ENCODE measurements at regions of chr10 and their contacts with region 1.

Region 1: GRCh38 chr10:128047351-128047750 is 78.9 kb downstream of the MKI67 start:
- DNase-seq: peak; percentile 65
- ATAC-seq: peak; percentile 99
- H3K4me3 Mint-ChIP-seq: no peak overlapping the region
- H3K27ac Mint-ChIP-seq: peak overlapping the region; percentile 45
- H3K4me1 Mint-ChIP-seq: peaks cover 9% of the 10 kb centered on the region
- H3K27me3 Mint-ChIP-seq: peaks cover 6% of the 10 kb centered on the region; the same call in 1 of the 2 replicates
- CTCF ChIP-seq: no peak

Region 2: DNA sequence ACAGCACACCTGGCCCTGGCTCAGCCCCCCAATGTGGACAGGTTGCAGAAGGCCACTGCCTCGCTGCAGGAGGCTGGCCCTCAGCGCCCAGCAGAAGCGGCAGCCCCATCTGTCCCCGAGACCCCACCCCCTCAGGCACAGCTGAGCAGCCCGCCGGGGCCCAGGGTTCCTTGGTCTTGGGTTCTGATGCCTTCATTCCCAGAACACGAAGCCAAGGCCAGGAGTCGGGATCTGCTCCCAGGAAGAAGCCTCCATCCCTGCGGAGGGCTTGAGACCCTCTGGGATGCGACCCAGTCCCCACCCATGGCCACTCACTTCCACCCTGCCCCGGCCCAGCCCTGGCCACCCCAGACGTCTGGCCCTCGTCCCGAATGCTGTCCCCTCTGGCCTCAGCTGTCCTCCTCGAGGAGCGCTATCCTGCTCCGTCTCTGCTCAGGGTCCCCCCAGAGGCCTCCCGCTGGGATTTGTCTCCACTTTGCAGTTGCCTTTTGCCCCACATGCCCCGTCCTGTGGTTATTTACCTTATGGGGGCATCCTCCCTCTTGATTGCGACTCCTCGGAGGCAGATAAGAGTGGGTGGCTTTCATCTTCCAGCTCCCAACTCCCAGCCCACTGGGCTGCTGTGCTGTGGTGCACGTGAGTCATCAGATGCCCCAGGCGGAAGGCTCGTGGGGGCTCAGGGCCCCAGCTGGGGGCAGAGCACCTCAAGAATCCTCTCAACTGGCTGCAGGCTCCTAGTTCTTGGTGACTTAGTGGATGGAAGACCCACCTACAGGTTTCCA is 18.7 kb before region 1 on chr10:
- CTCF ChIA-PET with region 1: no interaction called
- POLR2A ChIA-PET with region 1: no interaction called
- DNase-seq: no peak
- ATAC-seq: no peak
- H3K4me3 Mint-ChIP-seq: no peak overlapping the region
- H3K27ac Mint-ChIP-seq: no peak overlapping the region
- H3K4me1 Mint-ChIP-seq: peaks cover 5% of the 10 kb centered on the region; the same call in 1 of the 2 replicates
- H3K27me3 Mint-ChIP-seq: no peaks in the 10 kb centered on the region
- CTCF ChIP-seq: no peak

Region 3: GRCh38 chr10:128064108-128064969 is 17.0 kb after region 1 on chr10:
- CTCF ChIA-PET with region 1: interaction called, 35 read pairs
- POLR2A ChIA-PET with region 1: no interaction called
- DNase-seq: no peak
- ATAC-seq: no peak
- H3K4me3 Mint-ChIP-seq: no peak overlapping the region
- H3K27ac Mint-ChIP-seq: no peak overlapping the region
- H3K4me1 Mint-ChIP-seq: peaks cover 29% of the 10 kb centered on the region
- H3K27me3 Mint-ChIP-seq: no peaks in the 10 kb centered on the region
- CTCF ChIP-seq: no peak

Region 4: GRCh38 chr10:128125944-128126764 is 78.8 kb after region 1 on chr10 and contains the start of gene MKI67:
- CTCF ChIA-PET with region 1: interaction called, 12 read pairs
- POLR2A ChIA-PET with region 1: no interaction called
- DNase-seq: peak; percentile 86
- ATAC-seq: peak; percentile 83
- H3K4me3 Mint-ChIP-seq: peak within 1 kb of the TSS; percentile 92
- H3K27ac Mint-ChIP-seq: peak within 1 kb of the TSS; percentile 68; the same call in 1 of the 2 replicates
- H3K4me1 Mint-ChIP-seq: peaks cover 35% of the 10 kb centered on the region
- H3K27me3 Mint-ChIP-seq: no peaks in the 10 kb centered on the region
- CTCF ChIP-seq: no peak
- total RNA-seq, gene MKI67: 93.6 to 118 TPM (median 96.5 TPM) in 3 replicates